ENCODE measurements at regions of chr1 and their contacts with region 1.

Region 1: GRCh38 chr1:246081138-246081702 is 425.9 kb downstream of the SMYD3 start:
- DNase-seq: no peak
- CTCF ChIP-seq: no peak

Region 2: GRCh38 chr1:246067432-246068216 is 13.6 kb before region 1 on chr1:
- CTCF ChIA-PET with region 1: interaction called, 10 read pairs
- POLR2A ChIA-PET with region 1: no interaction called
- DNase-seq: peak; percentile 26
- CTCF ChIP-seq: no peak

Region 3: GRCh38 chr1:246104927-246105326 is 23.7 kb after region 1 on chr1:
- CTCF ChIA-PET with region 1: no interaction called
- POLR2A ChIA-PET with region 1: no interaction called
- DNase-seq: no peak
- CTCF ChIP-seq: no peak

Region 4: GRCh38 chr1:246583056-246583848 is 502.0 kb after region 1 on chr1:
- CTCF ChIA-PET with region 1: no interaction called
- POLR2A ChIA-PET with region 1: no interaction called
- DNase-seq: no peak
- CTCF ChIP-seq: no peak